CD4-positive, alpha-beta T cell (primary cell): ENCODE measurements at regions of chr3 and their contacts with region 1.

Region 1: DNA sequence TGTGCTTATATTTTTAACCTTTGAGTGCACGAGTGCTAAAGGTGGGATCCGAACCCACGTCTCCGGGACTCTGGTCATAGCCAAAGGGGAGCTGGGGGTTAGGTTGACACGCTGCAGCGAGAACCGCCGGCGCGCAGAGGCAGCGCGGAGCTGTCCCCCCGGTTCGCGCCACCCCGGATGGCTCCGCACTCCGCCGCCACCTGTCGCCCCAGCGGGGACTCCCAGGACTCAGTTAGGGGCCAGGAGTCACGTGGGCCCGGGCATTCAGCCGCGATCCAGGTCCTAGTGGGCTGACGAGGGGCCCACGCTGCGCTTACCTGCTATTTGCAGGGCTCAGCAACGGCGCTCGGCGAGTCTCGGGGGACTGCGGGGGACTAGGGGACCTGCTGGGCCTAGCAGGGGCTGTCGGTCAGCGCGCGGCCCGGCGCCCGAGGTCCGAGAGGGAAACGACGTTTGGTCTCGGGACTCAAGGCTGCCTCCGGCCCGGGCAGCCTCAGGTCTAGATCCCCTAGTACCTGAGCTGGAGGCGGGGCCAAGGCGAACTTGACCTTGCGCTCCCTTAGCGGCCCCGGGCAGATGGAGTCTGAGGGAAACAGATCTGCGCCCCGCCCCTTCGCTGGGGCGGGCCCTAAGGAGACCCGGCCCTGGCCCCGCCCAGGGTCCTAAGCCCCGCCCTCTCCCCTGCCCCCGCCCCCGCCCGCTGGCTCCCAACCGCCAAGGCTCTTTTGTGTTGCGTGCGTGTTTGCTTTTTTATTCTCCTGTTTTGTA is at the start of gene NMNAT3:
- DNase-seq: peak; percentile 70 to 91 (median 77)
- ATAC-seq: peak; percentile 98
- H3K4me3 ChIP-seq: peak within 1 kb of the TSS; percentile 92
- H3K4me3 Mint-ChIP-seq: peak within 1 kb of the TSS; percentile 88
- H3K27ac ChIP-seq: no peak within 1 kb of the TSS
- H3K27ac Mint-ChIP-seq: no peak within 1 kb of the TSS
- H3K4me1 ChIP-seq: peaks cover 19% of the 10 kb centered on the region
- H3K4me1 Mint-ChIP-seq: peaks cover 13% of the 10 kb centered on the region
- H3K27me3 ChIP-seq: no peaks in the 10 kb centered on the region
- H3K27me3 Mint-ChIP-seq: no peaks in the 10 kb centered on the region
- CTCF ChIP-seq: no peak
- total RNA-seq, gene NMNAT3: 1.5 to 1.9 TPM

Region 2: GRCh38 chr3:138329127-138329983 is 1348.2 kb before region 1 on chr3 and contains the start of gene NME9:
- CTCF ChIA-PET with region 1: no interaction called
- POLR2A ChIA-PET with region 1: no interaction called
- intact Hi-C with region 1: loop called in 1 of 2 experiments (anchors 10 kb)
- DNase-seq: peak; percentile 80 to 97 (median 90)
- ATAC-seq: peak; percentile 85
- H3K4me3 ChIP-seq: peak within 1 kb of the TSS; percentile 69
- H3K4me3 Mint-ChIP-seq: peak within 1 kb of the TSS; percentile 98
- H3K27ac ChIP-seq: peak within 1 kb of the TSS; percentile 49 to 81
- H3K27ac Mint-ChIP-seq: peak within 1 kb of the TSS; percentile 88
- H3K4me1 ChIP-seq: peaks cover 20% of the 10 kb centered on the region
- H3K4me1 Mint-ChIP-seq: peaks cover 37% of the 10 kb centered on the region
- H3K27me3 ChIP-seq: no peaks in the 10 kb centered on the region
- H3K27me3 Mint-ChIP-seq: no peaks in the 10 kb centered on the region
- CTCF ChIP-seq: peak; percentile 71
- total RNA-seq, gene NME9: 0.80 TPM in 1 of 2 experiments, not detected in the other

Region 3: GRCh38 chr3:139389458-139390209 is 287.9 kb before region 1 on chr3 and contains the start of gene COPB2:
- CTCF ChIA-PET with region 1: no interaction called
- POLR2A ChIA-PET with region 1: no interaction called
- intact Hi-C with region 1: loop called in 1 of 2 experiments (anchors 2 kb)
- DNase-seq: peak; percentile 82 to 97 (median 94)
- ATAC-seq: peak; percentile 82
- H3K4me3 ChIP-seq: peak within 1 kb of the TSS; percentile 71
- H3K4me3 Mint-ChIP-seq: peak within 1 kb of the TSS; percentile 96
- H3K27ac ChIP-seq: peak within 1 kb of the TSS; percentile 85 to 89
- H3K27ac Mint-ChIP-seq: peak within 1 kb of the TSS; percentile 98
- H3K4me1 ChIP-seq: peaks cover 26% of the 10 kb centered on the region
- H3K4me1 Mint-ChIP-seq: peaks cover 57% of the 10 kb centered on the region
- H3K27me3 ChIP-seq: no peaks in the 10 kb centered on the region
- H3K27me3 Mint-ChIP-seq: no peaks in the 10 kb centered on the region
- CTCF ChIP-seq: no peak
- total RNA-seq, gene COPB2: 13.0 to 13.8 TPM

Region 4: DNA sequence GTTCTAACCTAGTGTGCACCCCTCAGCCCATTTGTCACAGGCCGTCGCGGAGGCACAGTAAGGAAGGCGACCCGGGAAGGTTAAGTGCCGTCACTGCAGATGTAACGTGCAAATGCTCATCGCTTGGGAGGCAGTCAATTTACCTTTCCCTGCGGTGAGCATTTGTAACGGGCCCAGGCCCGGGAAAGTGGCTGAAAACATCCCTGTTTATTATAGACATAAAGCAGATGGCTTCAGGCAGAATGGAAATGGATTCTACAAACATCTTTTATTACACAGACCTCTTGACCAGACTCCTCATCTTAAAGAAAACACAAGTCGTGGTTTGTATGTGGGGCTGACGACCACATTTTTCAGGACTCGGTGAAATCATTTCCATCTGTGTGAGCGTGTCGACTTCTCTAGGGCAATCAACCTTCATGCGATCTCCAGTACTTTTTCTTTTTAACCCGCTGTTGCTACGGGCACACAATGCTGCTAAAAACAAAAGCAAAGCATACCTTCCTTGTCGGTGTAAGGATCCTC is 43.4 kb before region 1 on chr3:
- CTCF ChIA-PET with region 1: no interaction called
- POLR2A ChIA-PET with region 1: no interaction called
- intact Hi-C with region 1: no loop called
- DNase-seq: no peak
- ATAC-seq: no peak
- H3K4me3 ChIP-seq: no peak overlapping the region
- H3K4me3 Mint-ChIP-seq: no peak overlapping the region
- H3K27ac ChIP-seq: no peak overlapping the region
- H3K27ac Mint-ChIP-seq: no peak overlapping the region
- H3K4me1 ChIP-seq: no peaks in the 10 kb centered on the region
- H3K4me1 Mint-ChIP-seq: no peaks in the 10 kb centered on the region
- H3K27me3 ChIP-seq: no peaks in the 10 kb centered on the region
- H3K27me3 Mint-ChIP-seq: no peaks in the 10 kb centered on the region
- CTCF ChIP-seq: no peak

Region 5: DNA sequence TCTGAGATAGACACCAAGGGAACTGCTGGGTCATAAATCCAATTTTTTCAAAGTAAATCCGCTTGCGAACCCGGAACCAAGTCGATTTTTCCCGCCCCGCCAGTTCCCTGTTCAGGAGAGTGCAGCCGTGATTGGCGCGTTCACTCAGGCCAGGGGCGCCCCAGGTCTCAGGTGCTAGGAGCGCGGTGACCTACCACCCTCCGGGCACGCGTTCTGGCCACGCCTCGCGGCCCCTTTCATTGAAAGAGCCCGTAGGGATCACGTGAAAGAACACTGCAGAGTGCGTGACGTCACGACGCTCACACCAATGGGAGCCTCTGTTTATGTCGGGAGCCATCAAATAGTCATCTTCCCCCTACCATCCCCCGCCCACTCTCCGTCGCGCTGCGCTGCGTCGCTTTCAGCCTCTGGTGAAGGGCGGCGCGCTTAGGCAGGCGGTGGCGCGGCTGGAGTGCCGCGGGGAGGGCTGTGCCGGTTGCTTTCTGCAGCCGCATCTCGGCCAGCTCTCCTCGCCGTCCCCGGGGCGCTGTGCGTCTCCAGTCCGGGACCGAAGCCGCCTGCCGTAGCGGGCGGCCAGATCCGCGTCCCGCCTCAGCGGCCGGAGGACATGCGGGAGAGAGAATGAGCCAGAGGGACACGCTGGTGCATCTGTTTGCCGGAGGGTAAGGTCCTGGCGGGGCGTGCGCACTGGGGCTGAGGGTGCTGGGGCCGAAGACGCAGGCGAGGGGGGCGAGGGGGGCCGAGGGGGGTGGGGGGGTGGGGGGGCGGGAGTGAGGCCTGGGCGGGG is 1264.1 kb after region 1 on chr3 and contains the start of gene SLC25A36:
- CTCF ChIA-PET with region 1: no interaction called
- POLR2A ChIA-PET with region 1: no interaction called
- intact Hi-C with region 1: loop called in 1 of 2 experiments (anchors 10 kb)
- DNase-seq: peak; percentile 87 to 99 (median 94)
- ATAC-seq: peak; percentile 96
- H3K4me3 ChIP-seq: peak within 1 kb of the TSS; percentile 71
- H3K4me3 Mint-ChIP-seq: peak within 1 kb of the TSS; percentile 94
- H3K27ac ChIP-seq: peak within 1 kb of the TSS; percentile 71 to 78
- H3K27ac Mint-ChIP-seq: peak within 1 kb of the TSS; percentile 100
- H3K4me1 ChIP-seq: peaks cover 9% of the 10 kb centered on the region
- H3K4me1 Mint-ChIP-seq: peaks cover 42% of the 10 kb centered on the region
- H3K27me3 ChIP-seq: no peaks in the 10 kb centered on the region
- H3K27me3 Mint-ChIP-seq: no peaks in the 10 kb centered on the region
- CTCF ChIP-seq: no peak
- total RNA-seq, gene SLC25A36: 166 to 171 TPM